G401 (cell line): ENCODE measurements at regions of chr5 and their contacts with region 1.

Region 1: GRCh38 chr5:76325876-76326491 is 77.1 kb upstream of the IQGAP2 start:
- DNase-seq: no peak

Region 2: GRCh38 chr5:76393035-76393680 is 67.2 kb after region 1 on chr5:
- in situ Hi-C with region 1: loop called (anchors 5 kb)
- DNase-seq: no peak